Adrenal gland (tissue), 19 donors: ENCODE measurements at regions of chr2 and their contacts with region 1.

Region 1: DNA sequence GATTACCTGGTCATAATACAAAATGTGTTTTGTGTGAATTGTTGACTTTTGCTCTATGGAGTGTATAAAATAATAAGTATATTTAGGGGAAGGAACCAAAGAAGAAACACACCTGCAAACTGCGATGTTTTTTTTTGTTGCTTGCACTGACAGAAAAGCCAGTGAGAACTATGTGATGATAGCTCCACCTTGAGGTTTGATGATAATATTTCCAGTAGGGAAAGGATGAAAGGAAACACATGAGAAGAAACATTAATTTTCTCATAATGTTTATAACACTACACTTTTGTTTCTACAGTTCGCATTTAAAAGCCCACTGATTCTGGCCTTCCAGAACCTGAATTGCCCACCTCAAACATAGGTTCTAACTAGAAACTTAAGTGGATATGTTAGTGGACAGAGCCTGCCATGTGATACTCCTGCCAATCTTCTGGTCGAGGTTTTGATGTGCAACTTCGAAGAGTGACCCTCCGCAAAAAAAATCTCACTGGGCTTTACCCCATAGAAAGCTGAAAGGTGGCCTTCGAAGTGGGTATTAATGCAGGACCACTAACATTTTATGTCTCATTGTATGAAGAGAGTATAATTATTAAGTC is 476.4 kb upstream of the SPHKAP start:
- DNase-seq: no peak
- H3K4me3 ChIP-seq: no peak overlapping the region
- H3K27ac ChIP-seq: peak overlapping the region in 1 of 5 donors; percentile 18
- H3K4me1 ChIP-seq: peaks cover 7 to 15% of the 10 kb centered on the region in 2 donors
- H3K27me3 ChIP-seq: no peaks in the 10 kb centered on the region
- CTCF ChIP-seq: peak; percentile 35 to 74 (median 64)
- POLR2A ChIP-seq: no peak

Region 2: GRCh38 chr2:228048838-228049490 is 608.9 kb before region 1 on chr2:
- intact Hi-C with region 1: loop called in 1 of 2 experiments (anchors 10 kb)
- DNase-seq: peak; percentile 18 to 55 (median 37)
- H3K4me3 ChIP-seq: no peak overlapping the region
- H3K27ac ChIP-seq: no peak overlapping the region
- H3K4me1 ChIP-seq: peaks cover 0 to 4% of the 10 kb centered on the region in 2 donors
- H3K27me3 ChIP-seq: no peaks in the 10 kb centered on the region
- CTCF ChIP-seq: peak; percentile 45 to 70 (median 60)
- POLR2A ChIP-seq: no peak

Region 3: GRCh38 chr2:228318218-228318617 is 339.7 kb before region 1 on chr2:
- intact Hi-C with region 1: loop called in 1 of 2 experiments (anchors 10 kb)
- DNase-seq: peak; percentile 25 to 70 (median 48)
- H3K4me3 ChIP-seq: no peak overlapping the region
- H3K27ac ChIP-seq: no peak overlapping the region
- H3K4me1 ChIP-seq: peaks cover 0 to 8% of the 10 kb centered on the region in 2 donors
- H3K27me3 ChIP-seq: no peaks in the 10 kb centered on the region
- CTCF ChIP-seq: peak; percentile 19 to 61 (median 55)
- POLR2A ChIP-seq: no peak